BJ (cell line): ENCODE measurements at regions of chr1 and their contacts with region 1.

Region 1: DNA sequence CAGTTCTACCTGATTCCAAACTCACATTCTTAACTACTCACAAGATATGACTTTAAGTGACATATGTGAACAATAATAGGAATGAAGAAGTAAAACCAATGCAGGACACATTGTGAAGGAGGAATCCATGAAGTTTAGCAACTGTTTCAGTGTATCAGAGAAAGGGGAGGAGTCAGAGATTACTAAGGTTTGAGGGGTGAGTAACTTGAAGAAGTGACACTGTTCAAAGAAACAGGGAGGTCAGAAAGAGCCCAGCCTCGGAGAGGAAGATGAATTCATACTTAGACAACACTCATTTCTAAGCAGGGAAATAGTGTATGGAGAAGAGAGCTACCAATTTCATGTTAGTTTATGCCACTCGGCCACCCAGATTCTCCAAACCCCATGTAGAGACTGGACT is 28.2 kb upstream of the RPF1 start:
- DNase-seq: no peak
- H3K4me3 ChIP-seq: no peak overlapping the region
- H3K27me3 ChIP-seq: no peaks in the 10 kb centered on the region
- CTCF ChIP-seq: no peak

Region 2: DNA sequence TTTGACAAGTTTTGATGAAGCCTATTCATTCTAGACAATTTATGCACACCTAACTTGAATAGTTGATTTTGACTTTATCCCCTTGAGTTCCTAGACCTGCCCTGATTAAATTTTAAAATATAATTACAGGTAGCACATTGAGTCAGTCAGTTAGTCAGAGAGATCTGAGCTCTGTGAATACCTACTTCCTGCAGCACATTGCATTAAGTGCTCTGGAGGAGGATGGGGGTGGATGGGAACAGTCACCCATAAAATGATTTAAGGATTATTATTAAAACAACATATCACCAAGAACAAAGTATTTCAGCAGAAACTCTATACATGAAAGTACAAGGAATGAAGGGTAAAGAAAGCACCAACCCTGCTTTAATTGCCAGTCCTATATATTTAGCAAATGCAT is 16.4 kb after region 1 on chr1:
- CTCF ChIA-PET with region 1: interaction called, 3 read pairs
- POLR2A ChIA-PET with region 1: interaction called, 10 read pairs
- DNase-seq: no peak
- H3K4me3 ChIP-seq: no peak overlapping the region
- H3K27me3 ChIP-seq: peaks cover 6% of the 10 kb centered on the region
- CTCF ChIP-seq: no peak

Region 3: GRCh38 chr1:84506002-84506728 is 55.3 kb after region 1 on chr1 and contains the starts of genes GNG5 and SPATA1:
- CTCF ChIA-PET with region 1: no interaction called
- POLR2A ChIA-PET with region 1: no interaction called
- DNase-seq: peak; percentile 66
- H3K4me3 ChIP-seq: peak within 1 kb of the TSS; percentile 90
- H3K27me3 ChIP-seq: no peaks in the 10 kb centered on the region
- CTCF ChIP-seq: no peak
- polyA plus RNA-seq, gene GNG5: 60.4 and 92.3 TPM in 2 replicates
- polyA plus RNA-seq, gene SPATA1: 0.32 and 0.69 TPM in 2 replicates